ENCODE measurements at regions of chr9 and their contacts with region 1.

Region 1: GRCh38 chr9:95025213-95026147 is 292.0 kb downstream of the FANCC start:
- DNase-seq: peak; percentile 73
- H3K4me3 ChIP-seq: no peak overlapping the region
- H3K27ac ChIP-seq: peak overlapping the region; percentile 87 to 94
- H3K4me1 ChIP-seq: peaks cover 36 to 59% of the 10 kb centered on the region in 2 experiments
- H3K27me3 ChIP-seq: no peaks in the 10 kb centered on the region
- CTCF ChIP-seq: peak; percentile 53
- EP300 ChIP-seq: peak; percentile 60 to 75; a peak in 3 of 4 replicates
- RAD21 ChIP-seq: peak; percentile 47; the same call in 1 of the 2 replicates

Region 2: GRCh38 chr9:94979904-94980507 is 45.5 kb before region 1 on chr9:
- CTCF ChIA-PET with region 1: no interaction called
- POLR2A ChIA-PET with region 1: no interaction called
- DNase-seq: no peak
- H3K4me3 ChIP-seq: no peak overlapping the region
- H3K27ac ChIP-seq: peak overlapping the region in 1 of 2 experiments; percentile 81; a peak in 2 of 4 replicates
- H3K4me1 ChIP-seq: peaks cover 0 to 21% of the 10 kb centered on the region in 2 experiments; a peak in 1 of 4 replicates
- H3K27me3 ChIP-seq: no peaks in the 10 kb centered on the region
- CTCF ChIP-seq: no peak
- EP300 ChIP-seq: no peak
- RAD21 ChIP-seq: no peak

Region 3: GRCh38 chr9:95048225-95049087 is 23.0 kb after region 1 on chr9:
- CTCF ChIA-PET with region 1: interaction called, 13 read pairs
- POLR2A ChIA-PET with region 1: no interaction called
- DNase-seq: peak; percentile 88
- H3K4me3 ChIP-seq: peak overlapping the region; percentile 58 to 66
- H3K27ac ChIP-seq: peak overlapping the region; percentile 55 to 78
- H3K4me1 ChIP-seq: peaks cover 24 to 30% of the 10 kb centered on the region in 2 experiments; a peak in 3 of 4 replicates
- H3K27me3 ChIP-seq: no peaks in the 10 kb centered on the region
- CTCF ChIP-seq: no peak
- EP300 ChIP-seq: peak in 1 of 2 experiments; percentile 5; a peak in 1 of 4 replicates
- RAD21 ChIP-seq: no peak